ENCODE measurements at regions of chr13 and their contacts with region 1.

Region 1: GRCh38 chr13:19959831-19960652 is 1.5 kb downstream of the ZMYM2 start:
- DNase-seq: peak; percentile 77
- H3K4me3 ChIP-seq: peak overlapping the region; percentile 76 to 89
- H3K27ac ChIP-seq: peak overlapping the region; percentile 84 to 98
- H3K4me1 ChIP-seq: peaks cover 19 to 20% of the 10 kb centered on the region in 2 experiments; a peak in 3 of 4 replicates
- H3K27me3 ChIP-seq: no peaks in the 10 kb centered on the region
- CTCF ChIP-seq: peak; percentile 81
- EP300 ChIP-seq: peak in 1 of 2 experiments; percentile 41; a peak in 2 of 4 replicates
- RAD21 ChIP-seq: peak; percentile 69

Region 2: DNA sequence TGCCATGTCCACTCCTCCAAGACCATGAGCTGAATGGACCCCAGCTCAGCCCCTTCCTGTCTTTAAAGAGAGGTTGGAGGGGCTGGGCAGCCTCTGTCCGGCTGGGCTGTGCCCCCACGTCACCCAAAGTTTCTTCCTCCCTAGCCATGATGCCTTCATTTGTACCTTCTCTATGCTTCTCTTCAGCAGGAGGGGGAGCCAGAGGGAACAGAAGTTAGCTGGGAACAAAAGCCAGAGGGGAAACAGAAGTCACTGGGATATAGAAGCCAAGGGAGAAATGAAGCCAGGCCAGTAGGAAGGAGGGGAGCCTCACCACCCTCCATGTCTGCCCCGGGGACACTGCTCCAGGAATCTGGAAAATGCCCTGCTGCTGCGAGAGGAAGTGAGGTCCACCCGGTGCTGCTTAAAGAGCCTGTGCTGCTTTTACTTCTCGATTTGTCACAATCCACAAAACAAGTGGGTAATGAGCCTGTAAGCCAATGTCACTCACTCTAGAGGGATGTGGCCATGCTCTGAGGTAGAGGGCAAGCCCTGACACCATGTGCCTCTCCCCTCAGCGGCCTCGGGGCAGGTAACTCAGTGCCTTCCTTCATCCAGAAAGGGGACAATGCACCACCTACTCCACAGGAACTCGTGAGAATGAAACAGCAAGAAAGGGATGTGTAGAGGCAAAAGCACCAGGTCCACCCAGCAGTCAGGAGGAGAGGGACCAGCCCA is 884.8 kb before region 1 on chr13:
- CTCF ChIA-PET with region 1: no interaction called
- POLR2A ChIA-PET with region 1: no interaction called
- DNase-seq: no peak
- H3K4me3 ChIP-seq: no peak overlapping the region
- H3K27ac ChIP-seq: no peak overlapping the region
- H3K4me1 ChIP-seq: no peaks in the 10 kb centered on the region
- H3K27me3 ChIP-seq: no peaks in the 10 kb centered on the region
- CTCF ChIP-seq: peak; percentile 11; the same call in 1 of the 2 replicates
- EP300 ChIP-seq: no peak
- RAD21 ChIP-seq: no peak

Region 3: DNA sequence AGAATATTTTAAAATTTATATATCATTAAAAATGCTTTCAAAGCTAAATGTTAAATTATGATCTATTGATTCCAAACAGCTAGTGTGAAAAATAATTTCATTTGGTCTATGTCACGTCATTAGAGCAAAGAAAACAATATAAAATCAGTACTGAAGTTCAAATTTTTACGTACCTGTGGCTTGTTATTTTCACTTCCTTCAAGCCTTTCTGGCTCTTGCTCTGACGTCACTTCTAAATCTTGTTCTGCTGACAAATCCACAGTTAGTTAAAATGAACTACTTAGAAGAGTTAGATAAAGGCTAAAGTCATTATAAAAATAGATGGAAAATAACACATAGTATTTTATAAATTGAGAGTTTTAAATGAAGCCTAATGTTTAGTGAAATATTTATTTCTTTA is 630.7 kb before region 1 on chr13:
- CTCF ChIA-PET with region 1: no interaction called
- POLR2A ChIA-PET with region 1: no interaction called
- DNase-seq: no peak
- H3K4me3 ChIP-seq: no peak overlapping the region
- H3K27ac ChIP-seq: no peak overlapping the region
- H3K4me1 ChIP-seq: no peaks in the 10 kb centered on the region
- H3K27me3 ChIP-seq: no peaks in the 10 kb centered on the region
- CTCF ChIP-seq: no peak
- EP300 ChIP-seq: no peak
- RAD21 ChIP-seq: no peak

Region 4: DNA sequence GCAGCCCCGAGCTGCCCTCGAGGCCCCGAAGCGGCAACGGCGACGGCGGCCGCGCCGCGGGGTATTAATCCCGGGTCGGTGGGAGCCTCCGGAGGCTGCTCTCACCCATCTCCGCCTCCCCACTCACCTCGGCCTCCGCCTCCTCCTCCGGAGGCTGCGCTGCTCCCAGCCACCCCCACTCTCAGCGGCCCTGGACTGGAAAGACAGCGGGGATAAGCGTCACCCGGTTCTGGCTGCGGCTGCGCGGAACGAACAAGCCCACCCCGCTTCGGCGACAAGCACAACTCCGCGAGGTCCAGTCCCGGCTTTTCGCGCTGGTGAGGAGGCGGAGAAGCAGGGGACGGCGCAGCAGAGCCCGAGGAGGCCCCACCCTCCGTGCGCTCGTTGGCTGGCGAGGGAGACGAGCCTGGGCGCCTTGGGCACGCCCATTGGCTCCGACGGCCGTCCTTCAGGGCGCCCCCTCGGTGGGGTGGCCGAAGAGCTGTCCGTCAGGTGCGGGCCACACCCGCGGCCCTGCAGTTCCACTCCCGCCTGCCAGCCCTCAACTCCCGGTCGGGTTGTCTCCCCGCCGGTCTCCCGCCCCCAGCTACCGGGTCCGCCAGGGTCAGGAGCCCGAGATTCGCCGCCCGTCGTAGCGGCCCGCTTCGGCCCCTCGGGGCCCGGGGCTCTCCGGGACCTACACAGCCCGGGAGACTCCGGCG is 96.6 kb before region 1 on chr13 and contains the start of gene ZMYM5:
- CTCF ChIA-PET with region 1: interaction called, 11 read pairs
- POLR2A ChIA-PET with region 1: interaction called, 11 read pairs
- DNase-seq: peak; percentile 96
- H3K4me3 ChIP-seq: peak within 1 kb of the TSS; percentile 72 to 97
- H3K27ac ChIP-seq: peak within 1 kb of the TSS; percentile 97 to 98
- H3K4me1 ChIP-seq: peaks cover 14 to 16% of the 10 kb centered on the region in 2 experiments; a peak in 3 of 4 replicates
- H3K27me3 ChIP-seq: no peaks in the 10 kb centered on the region
- CTCF ChIP-seq: no peak
- EP300 ChIP-seq: 0 out of 4 replicates have a peak, but pooled peaks of 1 of the 2 experiments have one; percentile 38
- RAD21 ChIP-seq: peak; percentile 23
- polyA plus RNA-seq, gene ZMYM5: 5.2 and 8.5 TPM in 2 replicates

Region 5: DNA sequence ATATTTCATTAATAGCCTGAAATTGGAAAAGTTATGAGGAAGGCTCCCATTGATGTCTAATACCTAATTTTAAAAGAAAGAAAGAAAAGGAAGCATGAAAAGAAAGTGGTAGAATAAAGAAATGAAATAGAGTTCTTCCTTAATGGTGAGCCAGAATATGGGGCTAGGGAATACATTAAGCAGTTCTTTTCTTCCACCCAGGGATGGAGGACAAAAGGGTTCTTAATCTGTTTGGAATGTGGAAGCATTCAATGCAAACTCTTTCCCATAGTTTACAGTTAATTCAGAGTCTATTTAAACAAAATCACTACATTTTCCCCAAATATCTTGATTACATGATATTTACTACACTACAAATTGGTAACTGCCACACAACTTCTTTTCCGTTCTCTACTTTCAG is 19.9 kb before region 1 on chr13:
- CTCF ChIA-PET with region 1: interaction called, 11 read pairs
- POLR2A ChIA-PET with region 1: no interaction called
- DNase-seq: no peak
- H3K4me3 ChIP-seq: no peak overlapping the region
- H3K27ac ChIP-seq: no peak overlapping the region
- H3K4me1 ChIP-seq: no peaks in the 10 kb centered on the region
- H3K27me3 ChIP-seq: no peaks in the 10 kb centered on the region
- CTCF ChIP-seq: no peak
- EP300 ChIP-seq: no peak
- RAD21 ChIP-seq: no peak

Measured in SK-N-SH (cell line).